Ascending aorta (tissue), 2 donors: ENCODE measurements at regions of chr17 and their contacts with region 1.

Region 1: DNA sequence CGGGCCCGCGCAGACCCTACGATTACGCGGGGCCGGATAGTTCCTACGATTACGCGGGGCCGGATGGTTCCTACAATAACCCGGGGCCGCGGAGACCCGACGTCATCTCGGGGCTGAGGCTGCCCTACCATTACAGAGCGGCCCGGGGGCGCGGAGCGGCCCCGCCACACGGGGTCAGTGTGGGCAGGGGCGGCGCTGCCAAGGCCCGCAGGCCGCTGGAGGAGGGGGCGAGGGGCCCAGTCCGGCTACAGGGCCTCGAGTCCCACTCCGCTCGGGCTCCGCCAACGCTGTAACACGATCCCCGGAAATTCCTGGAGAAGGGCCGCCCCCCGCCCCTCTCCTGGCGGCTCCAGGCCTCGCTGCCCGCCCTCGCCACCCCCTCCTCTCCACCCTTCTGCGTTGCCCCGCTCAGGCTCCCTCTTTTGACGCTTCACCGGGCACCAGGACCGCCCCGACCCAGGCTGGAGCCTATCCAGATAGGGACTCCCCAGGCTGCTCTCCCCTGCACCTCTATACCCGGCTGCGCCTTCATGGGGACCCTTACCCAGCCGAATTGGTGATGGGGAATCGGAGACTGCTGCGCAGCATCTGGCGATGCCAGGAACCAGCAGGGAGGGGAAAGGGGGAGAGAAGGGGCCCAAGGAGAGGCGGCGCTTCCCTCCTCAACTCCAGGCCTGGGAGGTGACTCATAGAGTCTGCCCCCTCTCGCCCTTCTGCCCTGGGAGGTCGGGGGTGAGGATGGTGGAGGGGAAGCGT is at the start of gene RAB34:
- DNase-seq: peak; percentile 36 to 92
- H3K4me3 ChIP-seq: peak within 1 kb of the TSS; percentile 82 to 85
- H3K27ac ChIP-seq: peak within 1 kb of the TSS; percentile 98
- H3K4me1 ChIP-seq: peaks cover 11 to 40% of the 10 kb centered on the region in 2 donors
- H3K27me3 ChIP-seq: no peaks in the 10 kb centered on the region
- CTCF ChIP-seq: peak in 2 of 3 experiments; percentile 27 to 52
- total RNA-seq, gene RAB34: 172 TPM

Region 2: DNA sequence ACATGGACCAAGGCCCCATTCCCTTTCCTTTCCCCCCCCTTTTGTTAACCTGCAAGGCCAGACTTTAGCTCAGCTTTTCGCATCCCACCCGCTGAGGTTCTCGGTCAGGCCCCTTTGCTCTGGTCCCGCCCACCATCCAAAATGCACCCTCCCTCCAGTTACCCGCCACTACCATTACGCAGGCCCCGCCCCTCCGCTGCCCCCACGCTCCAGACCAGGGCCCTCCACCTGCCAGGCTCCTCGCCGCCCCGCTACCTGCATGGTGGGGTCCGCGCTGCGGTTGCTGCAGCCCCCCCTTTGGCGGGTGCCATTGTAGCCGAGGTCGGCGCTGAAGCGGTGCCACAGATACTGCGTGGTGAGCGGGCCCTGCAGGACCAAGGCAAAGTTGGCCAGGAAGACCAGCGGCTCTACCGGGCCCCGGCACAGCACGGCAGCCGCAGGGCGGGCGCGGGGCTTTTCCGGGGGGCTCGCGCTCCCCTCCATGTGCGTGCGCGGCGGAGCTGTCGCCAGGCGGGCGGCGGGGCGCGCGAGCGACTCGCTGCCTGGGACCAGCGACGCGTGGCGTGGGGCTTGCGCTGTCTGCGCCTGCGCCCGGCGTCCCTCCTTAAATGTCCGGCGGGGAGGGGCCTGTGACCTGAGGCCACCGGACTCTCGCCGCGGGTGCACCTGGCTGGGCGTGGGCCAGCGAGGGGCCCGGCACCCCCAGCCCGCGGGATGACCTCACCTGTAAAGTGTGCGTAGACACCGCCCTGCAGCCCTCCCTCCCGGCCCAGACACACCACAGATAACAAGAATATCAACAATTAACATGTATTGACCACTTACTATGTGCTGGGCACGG is 311.9 kb before region 1 on chr17 and contains the start of gene SLC46A1:
- intact Hi-C with region 1: loop called (anchors 5 kb)
- DNase-seq: peak in 1 of 2 donors; percentile 74
- H3K4me3 ChIP-seq: peak within 1 kb of the TSS; percentile 77 to 79
- H3K27ac ChIP-seq: peak within 1 kb of the TSS; percentile 52 to 54
- H3K4me1 ChIP-seq: peaks cover 9 to 11% of the 10 kb centered on the region in 2 donors
- H3K27me3 ChIP-seq: no peaks in the 10 kb centered on the region
- CTCF ChIP-seq: no peak
- total RNA-seq, gene SLC46A1: 9.7 TPM

Region 3: DNA sequence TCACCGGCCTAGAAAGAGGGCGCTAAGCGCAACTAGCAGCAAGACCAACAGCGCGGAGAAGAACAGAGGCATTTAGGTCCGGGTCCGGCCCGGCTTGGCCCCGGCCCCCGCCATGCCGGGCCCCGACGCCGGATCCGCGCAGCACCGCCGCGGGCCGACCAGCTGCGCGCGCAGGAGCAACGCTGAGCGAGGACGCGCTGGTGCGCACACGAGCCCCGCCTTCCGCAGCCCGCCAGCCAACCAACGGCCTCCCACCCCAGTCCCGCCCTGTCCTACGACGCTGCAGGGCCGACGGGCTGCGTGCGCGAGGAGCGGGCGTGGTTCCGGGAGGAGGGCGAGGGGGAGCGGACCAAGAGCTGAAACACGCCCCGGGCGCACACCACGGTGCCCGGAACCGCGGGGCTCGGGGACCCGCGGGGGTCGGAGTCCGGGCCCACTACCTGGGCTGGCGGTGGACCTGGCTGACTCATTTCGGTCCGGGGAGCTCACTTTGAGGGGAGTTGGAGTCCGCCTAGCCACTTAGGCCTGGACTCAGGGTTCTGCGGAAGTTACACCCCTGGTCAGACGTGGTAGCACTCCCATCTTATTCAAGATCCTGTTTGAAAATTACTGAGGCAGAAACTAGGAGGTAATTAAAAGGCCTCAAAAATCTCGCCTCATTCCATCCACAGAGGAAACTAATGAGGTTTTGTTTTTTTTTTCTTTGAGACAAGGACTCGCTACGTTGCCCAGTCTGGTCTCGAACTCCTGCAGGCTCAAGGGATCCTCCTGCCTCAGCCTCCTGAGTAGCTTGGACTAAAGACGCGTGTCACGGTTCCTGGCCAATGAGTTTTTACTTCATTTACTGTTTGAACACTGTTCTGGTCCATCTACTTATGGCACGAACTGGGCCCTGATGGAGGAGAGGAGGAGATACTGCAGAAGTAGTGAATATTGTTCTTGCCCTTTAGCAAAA is 72.5 kb before region 1 on chr17 and contains the start of gene BLTP2:
- intact Hi-C with region 1: loop called (anchors 2 kb)
- DNase-seq: peak; percentile 81 to 97
- H3K4me3 ChIP-seq: peak within 1 kb of the TSS; percentile 91 to 95
- H3K27ac ChIP-seq: peak within 1 kb of the TSS; percentile 93 to 94
- H3K4me1 ChIP-seq: peaks cover 5 to 27% of the 10 kb centered on the region in 2 donors
- H3K27me3 ChIP-seq: no peaks in the 10 kb centered on the region
- CTCF ChIP-seq: no peak
- total RNA-seq, gene BLTP2: 104 TPM